Endothelial cell of umbilical vein (primary cell): ENCODE measurements at regions of chr6 and their contacts with region 1.

Region 1: GRCh38 chr6:42745707-42746462 is at the start of gene TBCC:
- DNase-seq: peak; percentile 98
- H3K4me3 ChIP-seq: peak within 1 kb of the TSS; percentile 84 to 92 (median 90)
- H3K27ac ChIP-seq: peak within 1 kb of the TSS; percentile 72
- H3K4me1 ChIP-seq: peaks cover 25% of the 10 kb centered on the region
- H3K27me3 ChIP-seq: no peaks in the 10 kb centered on the region
- CTCF ChIP-seq: no peak
- POLR2A ChIP-seq: peak; percentile 97
- total RNA-seq, gene TBCC: 17.1 and 19.1 TPM in 2 replicates

Region 2: DNA sequence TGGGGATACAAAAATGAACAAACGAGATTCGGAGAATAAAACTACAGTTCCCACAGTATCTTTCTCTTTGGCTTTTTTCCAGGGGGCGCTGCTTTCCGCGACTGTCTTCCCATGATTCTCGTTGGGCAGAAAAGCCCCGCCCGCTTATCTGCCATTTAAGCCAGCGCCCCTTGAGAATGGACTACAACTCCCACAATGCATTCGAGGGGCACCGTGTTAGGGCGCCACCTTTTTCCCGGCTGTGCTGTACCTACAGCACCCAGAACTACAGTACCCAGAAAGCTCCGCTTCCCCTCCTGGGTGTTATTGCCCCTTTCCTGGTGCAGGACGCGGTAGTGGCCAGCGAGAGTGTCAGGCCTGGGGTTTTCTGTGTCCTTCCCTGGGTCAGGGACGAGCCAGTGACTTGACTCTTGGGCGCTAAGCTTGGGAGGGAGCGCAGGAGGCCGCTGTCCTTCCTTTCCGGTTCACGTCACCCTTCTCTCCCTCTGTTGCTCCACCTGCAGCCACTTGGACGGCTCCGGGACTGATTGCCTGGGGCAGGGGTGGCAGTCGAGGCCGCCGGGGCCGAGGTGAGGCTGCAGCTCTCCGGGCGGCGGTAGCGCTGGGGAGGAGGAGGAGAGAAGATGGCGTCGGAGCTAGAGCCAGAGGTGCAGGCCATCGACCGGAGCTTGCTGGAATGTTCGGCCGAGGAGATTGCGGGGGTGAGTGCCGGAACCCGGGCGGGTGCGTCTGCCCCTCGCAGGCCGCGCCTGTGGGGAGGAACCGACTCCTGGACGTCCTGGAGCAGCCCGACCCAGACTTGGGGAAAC is 182.0 kb before region 1 on chr6 and contains the start of gene UBR2:
- CTCF ChIA-PET with region 1: no interaction called
- POLR2A ChIA-PET with region 1: interaction called, 13 read pairs
- dilution Hi-C with region 1: no loop called
- intact Hi-C with region 1: loop called (anchors 1 kb)
- DNase-seq: peak; percentile 98
- H3K4me3 ChIP-seq: peak within 1 kb of the TSS; percentile 93 to 97 (median 94)
- H3K27ac ChIP-seq: peak within 1 kb of the TSS; percentile 59
- H3K4me1 ChIP-seq: peaks cover 11% of the 10 kb centered on the region
- H3K27me3 ChIP-seq: peaks cover 0 to 3% of the 10 kb centered on the region in 2 experiments
- CTCF ChIP-seq: peak in 1 of 2 donors; percentile 27
- POLR2A ChIP-seq: peak; percentile 56
- total RNA-seq, gene UBR2: 18.6 and 22.3 TPM in 2 replicates

Region 3: GRCh38 chr6:42890311-42891198 is 144.7 kb after region 1 on chr6:
- CTCF ChIA-PET with region 1: no interaction called
- POLR2A ChIA-PET with region 1: no interaction called
- dilution Hi-C with region 1: no loop called
- intact Hi-C with region 1: loop called (anchors 5 kb)
- DNase-seq: peak; percentile 95
- H3K4me3 ChIP-seq: peak overlapping the region; percentile 26 to 68 (median 62)
- H3K27ac ChIP-seq: peak overlapping the region; percentile 44
- H3K4me1 ChIP-seq: peaks cover 4% of the 10 kb centered on the region
- H3K27me3 ChIP-seq: no peaks in the 10 kb centered on the region
- CTCF ChIP-seq: no peak
- POLR2A ChIP-seq: peak; percentile 95